Right ventricle myocardium inferior (tissue), 1 donor: ENCODE measurements at regions of chr3 and their contacts with region 1.

Region 1: GRCh38 chr3:52623234-52623792 is 62.4 kb downstream of the PBRM1 start:
- DNase-seq: no peak
- ATAC-seq: no peak

Region 2: DNA sequence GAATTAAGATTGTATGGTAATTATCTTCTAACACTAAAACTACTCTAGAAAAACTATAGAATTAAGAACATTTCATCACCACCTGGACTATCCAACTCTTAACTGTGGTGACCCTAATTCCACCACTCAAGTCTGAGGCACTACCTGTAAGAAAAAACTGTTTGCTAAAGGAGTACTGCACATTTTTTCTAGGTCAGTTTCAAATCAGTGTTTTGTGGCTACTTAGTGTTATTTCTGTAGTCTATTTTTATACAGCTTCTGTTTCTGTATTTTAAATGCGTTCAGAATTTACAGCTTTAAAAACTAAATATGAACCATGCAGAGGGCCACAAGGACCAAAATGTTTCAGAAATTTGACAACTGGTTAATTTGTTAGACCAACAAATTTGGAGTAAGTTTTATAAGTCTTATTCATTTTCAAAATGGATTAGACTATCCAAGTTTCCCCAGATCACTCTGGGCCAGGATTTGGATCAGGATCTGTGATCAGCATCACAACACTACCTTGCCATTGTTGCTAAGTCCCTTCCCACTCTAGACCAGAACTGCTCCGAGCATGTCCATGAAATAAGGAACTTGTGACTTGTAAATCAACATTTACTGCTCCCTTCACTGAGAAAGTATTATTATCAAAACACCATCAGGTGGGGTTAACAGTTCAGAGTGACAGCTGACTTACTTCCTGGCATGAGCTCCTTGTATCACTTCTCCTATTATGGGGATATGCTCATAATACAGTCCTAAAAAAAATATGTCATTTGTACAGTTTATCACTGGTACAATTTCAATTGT is 73.7 kb after region 1 on chr3:
- intact Hi-C with region 1: loop called (anchors 10 kb)
- DNase-seq: no peak
- ATAC-seq: no peak

Region 3: GRCh38 chr3:53016236-53016635 is 392.9 kb after region 1 on chr3:
- intact Hi-C with region 1: no loop called
- DNase-seq: no peak
- ATAC-seq: no peak